Ascending aorta (tissue), 2 donors: ENCODE measurements at regions of chr10 and their contacts with region 1.

Region 1: GRCh38 chr10:114577133-114577532 is 80.9 kb downstream of the ABLIM1 start:
- DNase-seq: no peak
- H3K4me3 ChIP-seq: no peak overlapping the region
- H3K27ac ChIP-seq: peak overlapping the region; percentile 45 to 52
- H3K4me1 ChIP-seq: peaks cover 0 to 16% of the 10 kb centered on the region in 2 donors
- H3K27me3 ChIP-seq: no peaks in the 10 kb centered on the region
- CTCF ChIP-seq: no peak

Region 2: GRCh38 chr10:114458955-114459354 is 118.2 kb before region 1 on chr10:
- intact Hi-C with region 1: no loop called
- DNase-seq: no peak
- H3K4me3 ChIP-seq: no peak overlapping the region
- H3K27ac ChIP-seq: no peak overlapping the region
- H3K4me1 ChIP-seq: no peaks in the 10 kb centered on the region
- H3K27me3 ChIP-seq: no peaks in the 10 kb centered on the region
- CTCF ChIP-seq: peak in 2 of 3 experiments; percentile 22 to 30

Region 3: GRCh38 chr10:114520453-114520852 is 56.7 kb before region 1 on chr10:
- intact Hi-C with region 1: no loop called
- DNase-seq: peak in 1 of 2 donors; percentile 69
- H3K4me3 ChIP-seq: no peak overlapping the region
- H3K27ac ChIP-seq: peak overlapping the region; percentile 12 to 46
- H3K4me1 ChIP-seq: peaks cover 0 to 6% of the 10 kb centered on the region in 2 donors
- H3K27me3 ChIP-seq: no peaks in the 10 kb centered on the region
- CTCF ChIP-seq: no peak

Region 4: GRCh38 chr10:114683162-114683561 is 106.0 kb after region 1 on chr10:
- intact Hi-C with region 1: loop called (anchors 2 kb)
- DNase-seq: peak in 1 of 2 donors; percentile 66
- H3K4me3 ChIP-seq: peak overlapping the region; percentile 27 to 44
- H3K27ac ChIP-seq: peak overlapping the region; percentile 38 to 76
- H3K4me1 ChIP-seq: peaks cover 0 to 19% of the 10 kb centered on the region in 2 donors
- H3K27me3 ChIP-seq: no peaks in the 10 kb centered on the region
- CTCF ChIP-seq: no peak

Region 5: DNA sequence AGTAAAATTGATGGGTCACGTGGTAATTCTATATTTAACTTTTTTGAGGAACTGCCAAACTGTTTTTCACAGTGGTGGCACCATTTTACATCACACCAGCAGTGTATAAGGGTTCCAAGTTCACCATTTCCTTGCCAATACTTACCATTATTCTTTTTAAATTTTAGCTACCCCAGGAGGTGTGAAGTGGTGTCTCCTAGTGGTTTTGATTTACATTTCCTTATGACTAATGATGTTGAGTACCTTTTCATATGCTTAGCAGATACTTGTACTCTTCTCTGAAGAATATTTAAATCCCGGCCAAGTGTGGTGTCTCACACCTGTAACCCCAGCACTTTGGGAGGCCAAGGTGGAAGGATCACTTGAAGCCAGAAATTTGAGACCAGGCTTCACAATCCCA is 273.0 kb after region 1 on chr10:
- intact Hi-C with region 1: no loop called
- DNase-seq: no peak
- H3K4me3 ChIP-seq: no peak overlapping the region
- H3K27ac ChIP-seq: no peak overlapping the region
- H3K4me1 ChIP-seq: no peaks in the 10 kb centered on the region
- H3K27me3 ChIP-seq: no peaks in the 10 kb centered on the region
- CTCF ChIP-seq: no peak

Region 6: GRCh38 chr10:114893251-114893650 is 316.1 kb after region 1 on chr10:
- intact Hi-C with region 1: no loop called
- DNase-seq: no peak
- H3K4me3 ChIP-seq: no peak overlapping the region
- H3K27ac ChIP-seq: no peak overlapping the region
- H3K4me1 ChIP-seq: no peaks in the 10 kb centered on the region
- H3K27me3 ChIP-seq: no peaks in the 10 kb centered on the region
- CTCF ChIP-seq: no peak